PC-9 (cell line): ENCODE measurements at regions of chr4 and their contacts with region 1.

Region 1: DNA sequence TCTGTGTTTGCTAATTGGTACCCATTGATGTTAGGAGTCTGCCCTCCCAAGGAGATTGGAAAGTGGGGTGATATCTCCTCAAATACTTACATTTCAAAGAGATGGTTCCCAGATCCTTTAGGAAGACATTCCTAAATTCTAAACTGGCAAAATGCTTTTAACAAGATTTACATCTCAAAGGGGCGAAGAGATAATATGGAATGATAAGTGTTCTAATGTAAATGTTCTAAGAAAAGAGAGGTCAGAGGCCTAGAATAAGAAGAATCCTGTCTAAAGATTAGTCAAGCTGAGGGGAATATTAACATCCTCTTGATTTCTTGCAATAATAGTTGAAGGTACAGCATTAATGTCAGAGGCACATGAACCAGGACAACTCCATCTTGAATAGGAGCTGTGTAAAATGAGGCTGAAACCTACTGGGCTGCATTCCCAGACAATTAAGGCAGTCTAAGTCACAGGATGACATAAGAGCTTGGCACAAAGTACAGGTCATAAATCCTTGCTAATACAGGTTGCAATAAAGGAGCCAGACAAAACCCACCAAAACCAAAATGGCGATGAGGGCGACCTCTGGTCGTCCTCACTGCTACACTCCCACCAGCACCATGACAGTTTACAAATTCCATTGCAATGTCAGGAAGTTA is 2248.1 kb downstream of the ARAP2 start:
- DNase-seq: no peak
- H3K4me3 ChIP-seq: no peak overlapping the region
- H3K27ac ChIP-seq: no peak overlapping the region
- H3K4me1 ChIP-seq: no peaks in the 10 kb centered on the region
- H3K27me3 ChIP-seq: no peaks in the 10 kb centered on the region
- CTCF ChIP-seq: no peak

Region 2: DNA sequence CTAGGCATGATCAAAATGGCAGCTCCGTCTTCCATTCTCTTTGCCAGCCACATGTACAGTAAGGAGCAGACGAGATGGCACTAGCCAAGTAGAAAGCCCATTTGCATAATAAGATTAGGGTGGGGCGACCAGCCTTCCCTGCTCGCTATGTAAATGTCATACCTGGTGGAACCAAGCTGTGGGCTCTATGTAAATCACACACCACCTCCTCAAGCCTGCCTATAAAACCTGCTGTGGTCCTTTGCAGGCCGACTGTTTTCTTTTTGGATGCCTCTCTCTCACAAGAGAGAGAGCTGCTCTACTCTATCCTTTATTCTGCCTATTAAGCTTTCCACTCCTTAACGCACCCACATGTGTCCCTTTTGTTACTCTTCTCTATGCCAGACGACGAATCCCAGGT is 775.4 kb after region 1 on chr4:
- CTCF ChIA-PET with region 1: no interaction called
- POLR2A ChIA-PET with region 1: interaction called, 11 read pairs
- intact Hi-C with region 1: no loop called
- DNase-seq: no peak
- H3K4me3 ChIP-seq: no peak overlapping the region
- H3K27ac ChIP-seq: no peak overlapping the region
- H3K4me1 ChIP-seq: no peaks in the 10 kb centered on the region
- H3K27me3 ChIP-seq: no peaks in the 10 kb centered on the region
- CTCF ChIP-seq: no peak